ENCODE measurements at regions of chr3 and their contacts with region 1.

Region 1: GRCh38 chr3:40580494-40581091 is 55.8 kb downstream of the ZNF621 start:
- DNase-seq: peak; percentile 18 to 61 (median 51)
- ATAC-seq: peak; percentile 72
- H3K4me3 ChIP-seq: no peak overlapping the region
- H3K4me3 Mint-ChIP-seq: no peak overlapping the region
- H3K27ac ChIP-seq: no peak overlapping the region
- H3K27ac Mint-ChIP-seq: peak overlapping the region in 1 of 9 donors; percentile 5
- H3K4me1 ChIP-seq: no peaks in the 10 kb centered on the region
- H3K4me1 Mint-ChIP-seq: no peaks in the 10 kb centered on the region
- H3K27me3 ChIP-seq: no peaks in the 10 kb centered on the region
- H3K27me3 Mint-ChIP-seq: peaks cover 0 to 9% (median 4%) of the 10 kb centered on the region in 5 donors

Region 2: DNA sequence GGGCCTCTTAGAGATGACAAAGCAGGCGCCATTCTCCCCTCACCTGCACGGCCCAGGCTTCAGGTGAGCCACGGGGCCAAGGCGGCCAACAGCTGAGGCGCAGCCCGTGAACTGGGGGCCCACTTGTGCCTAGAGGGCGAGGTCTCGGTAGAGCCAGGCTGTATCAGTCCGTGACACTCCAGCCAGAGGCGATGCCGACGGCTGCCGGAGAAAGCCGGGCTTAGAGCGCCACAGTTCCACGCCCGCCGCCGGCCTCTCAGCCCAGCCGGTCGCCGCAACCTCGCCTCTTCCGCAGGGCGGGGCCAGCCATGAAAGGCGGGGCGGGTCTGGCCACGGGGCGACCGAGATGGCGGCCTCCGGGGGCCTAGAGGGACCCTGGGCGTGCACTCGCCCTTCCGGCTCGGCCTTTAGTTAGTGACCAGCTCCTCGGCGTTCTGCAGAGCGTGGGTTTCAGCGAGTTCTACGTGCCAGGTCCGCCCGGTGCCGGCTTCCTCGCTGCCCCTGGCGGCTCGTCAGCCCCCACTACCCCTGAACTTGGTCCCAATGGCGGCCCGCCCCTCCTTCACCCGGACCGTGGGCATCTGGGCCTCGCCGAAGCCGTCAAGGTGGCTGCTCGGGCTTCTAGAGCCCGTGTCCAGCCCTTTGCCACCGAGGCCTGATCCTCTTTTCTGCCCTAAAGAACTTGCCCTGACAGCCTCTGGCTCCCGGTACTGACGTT is 55.9 kb before region 1 on chr3 and contains the start of gene ZNF621:
- CTCF ChIA-PET with region 1: no interaction called
- POLR2A ChIA-PET with region 1: no interaction called
- intact Hi-C with region 1: no loop called
- DNase-seq: peak; percentile 43 to 90 (median 73)
- ATAC-seq: peak; percentile 99
- H3K4me3 ChIP-seq: peak within 1 kb of the TSS; percentile 69
- H3K4me3 Mint-ChIP-seq: peak within 1 kb of the TSS; percentile 85 to 97 (median 96)
- H3K27ac ChIP-seq: peak within 1 kb of the TSS; percentile 81
- H3K27ac Mint-ChIP-seq: peak within 1 kb of the TSS; percentile 91 to 98 (median 97)
- H3K4me1 ChIP-seq: peaks cover 0 to 15% of the 10 kb centered on the region in 2 donors
- H3K4me1 Mint-ChIP-seq: peaks cover 17 to 39% (median 27%) of the 10 kb centered on the region in 7 donors
- H3K27me3 ChIP-seq: no peaks in the 10 kb centered on the region
- H3K27me3 Mint-ChIP-seq: no peaks in the 10 kb centered on the region
- total RNA-seq, gene ZNF621: 14.6 to 26.9 (median 21.9) TPM

Region 3: DNA sequence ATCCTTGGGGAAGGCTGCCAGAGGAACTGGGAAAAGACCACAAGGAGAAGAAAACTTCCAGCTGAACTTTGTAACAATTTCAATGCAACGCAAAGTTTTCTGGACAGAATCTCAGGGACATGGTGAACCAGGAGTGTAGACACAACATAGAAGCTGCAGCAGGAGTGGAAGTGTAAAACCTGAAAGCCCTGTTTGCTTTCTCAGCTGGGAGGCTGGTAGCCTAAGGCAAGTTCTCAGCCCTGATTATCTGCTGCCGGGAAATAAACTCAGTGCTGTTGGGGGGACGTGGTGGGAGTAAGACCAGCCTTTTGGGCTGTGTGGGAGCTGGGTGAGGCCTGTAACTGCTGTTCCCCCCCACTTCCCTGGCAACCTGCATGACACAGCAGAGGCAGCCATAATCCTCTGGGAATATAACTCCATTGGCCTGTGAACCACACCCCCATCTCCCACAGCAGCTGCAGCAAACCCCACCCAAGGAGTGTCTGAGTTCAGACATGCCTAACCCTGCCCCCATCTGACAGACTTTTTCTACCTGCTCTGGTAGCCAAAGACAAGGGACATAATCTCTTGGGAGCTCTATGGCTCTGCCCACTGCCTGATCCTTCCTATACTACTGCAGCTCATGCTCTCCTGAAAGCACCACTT is 50.9 kb after region 1 on chr3:
- CTCF ChIA-PET with region 1: no interaction called
- POLR2A ChIA-PET with region 1: no interaction called
- intact Hi-C with region 1: no loop called
- DNase-seq: no peak
- ATAC-seq: no peak
- H3K4me3 ChIP-seq: no peak overlapping the region
- H3K4me3 Mint-ChIP-seq: no peak overlapping the region
- H3K27ac ChIP-seq: no peak overlapping the region
- H3K27ac Mint-ChIP-seq: no peak overlapping the region
- H3K4me1 ChIP-seq: no peaks in the 10 kb centered on the region
- H3K4me1 Mint-ChIP-seq: no peaks in the 10 kb centered on the region
- H3K27me3 ChIP-seq: no peaks in the 10 kb centered on the region
- H3K27me3 Mint-ChIP-seq: peaks cover 0 to 47% (median 18%) of the 10 kb centered on the region in 5 donors

Region 4: DNA sequence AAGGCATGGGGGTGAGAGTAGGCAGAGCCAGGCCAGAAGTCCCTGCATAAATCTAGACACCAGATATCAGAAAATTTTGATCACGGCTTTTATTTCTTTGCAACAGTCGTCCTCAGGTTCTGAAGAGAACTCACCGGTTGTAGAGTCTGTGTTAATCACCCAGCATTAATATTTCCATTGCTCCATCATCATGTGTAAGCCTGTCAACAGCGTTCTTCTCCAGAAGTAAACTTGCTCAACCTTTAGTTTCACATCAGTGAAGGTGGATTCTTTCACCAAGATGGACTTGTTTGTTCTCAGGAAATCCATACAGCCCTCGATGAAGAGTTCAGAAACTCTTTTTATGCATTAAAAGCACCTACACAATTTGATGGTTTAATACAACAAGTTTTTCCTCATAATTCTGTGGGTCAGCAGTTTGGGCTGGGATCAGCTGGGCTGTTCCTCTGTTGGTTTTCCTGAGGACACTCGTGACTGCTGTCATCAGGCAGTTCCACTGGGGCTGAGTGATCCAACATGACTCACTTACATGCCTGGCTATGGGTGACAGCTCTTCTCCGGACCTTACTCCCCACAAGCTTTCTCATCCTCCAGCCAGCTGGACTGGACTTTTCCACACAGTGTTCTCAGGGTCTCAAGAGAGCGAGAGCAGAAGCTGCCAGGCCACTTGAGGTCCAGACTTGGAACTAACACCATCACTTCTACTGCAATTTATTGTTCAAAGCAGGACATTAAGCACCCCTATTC is 247.5 kb after region 1 on chr3:
- CTCF ChIA-PET with region 1: no interaction called
- POLR2A ChIA-PET with region 1: no interaction called
- intact Hi-C with region 1: loop called in 1 of 2 experiments (anchors 10 kb)
- DNase-seq: no peak
- ATAC-seq: no peak
- H3K4me3 ChIP-seq: no peak overlapping the region
- H3K4me3 Mint-ChIP-seq: no peak overlapping the region
- H3K27ac ChIP-seq: no peak overlapping the region
- H3K27ac Mint-ChIP-seq: no peak overlapping the region
- H3K4me1 ChIP-seq: no peaks in the 10 kb centered on the region
- H3K4me1 Mint-ChIP-seq: no peaks in the 10 kb centered on the region
- H3K27me3 ChIP-seq: no peaks in the 10 kb centered on the region
- H3K27me3 Mint-ChIP-seq: peaks cover 0 to 12% (median 4%) of the 10 kb centered on the region in 5 donors

Region 5: GRCh38 chr3:41881233-41881821 is 1300.7 kb after region 1 on chr3:
- CTCF ChIA-PET with region 1: interaction called, 59 read pairs
- POLR2A ChIA-PET with region 1: no interaction called
- intact Hi-C with region 1: loop called (anchors 1 kb)
- DNase-seq: peak in 7 of 9 donors; percentile 1 to 54 (median 40)
- ATAC-seq: no peak
- H3K4me3 ChIP-seq: no peak overlapping the region
- H3K4me3 Mint-ChIP-seq: no peak overlapping the region
- H3K27ac ChIP-seq: no peak overlapping the region
- H3K27ac Mint-ChIP-seq: no peak overlapping the region
- H3K4me1 ChIP-seq: no peaks in the 10 kb centered on the region
- H3K4me1 Mint-ChIP-seq: no peaks in the 10 kb centered on the region
- H3K27me3 ChIP-seq: no peaks in the 10 kb centered on the region
- H3K27me3 Mint-ChIP-seq: no peaks in the 10 kb centered on the region

Region 6: GRCh38 chr3:42101048-42101447 is 1520.5 kb after region 1 on chr3:
- CTCF ChIA-PET with region 1: interaction called, 4 read pairs
- POLR2A ChIA-PET with region 1: no interaction called
- intact Hi-C with region 1: loop called (anchors 1 kb)
- DNase-seq: no peak
- ATAC-seq: peak; percentile 46
- H3K4me3 ChIP-seq: no peak overlapping the region
- H3K4me3 Mint-ChIP-seq: no peak overlapping the region
- H3K27ac ChIP-seq: no peak overlapping the region
- H3K27ac Mint-ChIP-seq: no peak overlapping the region
- H3K4me1 ChIP-seq: no peaks in the 10 kb centered on the region
- H3K4me1 Mint-ChIP-seq: peaks cover 0 to 23% (median 10%) of the 10 kb centered on the region in 7 donors
- H3K27me3 ChIP-seq: no peaks in the 10 kb centered on the region
- H3K27me3 Mint-ChIP-seq: no peaks in the 10 kb centered on the region